Cardiac septum (tissue), 1 donor: ENCODE measurements at regions of chr15 and their contacts with region 1.

Region 1: GRCh38 chr15:55196458-55197361 is at the start of gene RSL24D1:
- DNase-seq: peak; percentile 98
- total RNA-seq, gene RSL24D1: 38.4 TPM

Region 2: DNA sequence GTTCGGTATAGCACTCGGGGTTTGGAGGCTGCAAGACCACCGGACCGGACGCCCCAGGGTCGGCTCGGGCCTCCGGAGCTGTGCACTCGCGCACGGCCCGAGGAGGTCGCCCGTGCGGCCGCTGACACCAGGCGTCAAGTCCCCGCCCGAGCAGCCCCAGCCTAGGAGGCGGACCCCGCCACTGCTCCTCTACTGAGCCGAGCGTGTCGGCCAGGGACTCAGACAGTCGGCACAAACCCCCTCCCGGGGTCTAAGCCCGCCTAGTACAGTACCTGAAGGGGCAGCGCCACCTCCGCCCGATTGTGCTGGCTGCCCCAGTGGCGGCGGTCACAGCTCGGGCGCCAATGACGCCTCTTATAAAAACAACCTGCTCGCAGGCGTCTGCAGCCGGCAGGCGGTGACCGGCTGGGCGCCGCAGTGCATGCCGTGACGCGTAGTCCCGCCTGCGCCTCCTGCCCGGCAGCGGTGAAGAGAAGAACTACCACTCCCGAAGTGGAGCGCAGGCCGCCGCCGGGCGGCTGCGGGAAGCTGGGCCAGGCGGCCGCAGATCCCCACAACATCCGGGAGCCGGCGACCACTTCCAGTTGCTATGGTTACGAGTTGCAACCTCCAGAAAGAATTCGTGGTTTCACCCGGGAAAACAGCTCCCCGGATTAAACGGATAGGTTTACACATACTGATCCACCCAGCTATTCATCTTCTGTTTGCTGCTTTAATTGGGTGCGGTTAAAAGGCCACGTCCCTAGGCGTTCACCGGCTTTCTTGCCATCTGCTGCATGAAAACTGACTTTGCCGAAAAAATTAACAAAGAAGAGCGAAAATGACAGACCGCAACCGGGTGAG is 211.5 kb after region 1 on chr15 and contains the starts of genes CCPG1 and PIERCE2:
- intact Hi-C with region 1: loop called (anchors 5 kb)
- DNase-seq: peak; percentile 98
- total RNA-seq, gene CCPG1: 83.3 TPM
- total RNA-seq, gene PIERCE2: 3.2 TPM